Psoas muscle (tissue), 8 donors: ENCODE measurements at regions of chr9 and their contacts with region 1.

Region 1: DNA sequence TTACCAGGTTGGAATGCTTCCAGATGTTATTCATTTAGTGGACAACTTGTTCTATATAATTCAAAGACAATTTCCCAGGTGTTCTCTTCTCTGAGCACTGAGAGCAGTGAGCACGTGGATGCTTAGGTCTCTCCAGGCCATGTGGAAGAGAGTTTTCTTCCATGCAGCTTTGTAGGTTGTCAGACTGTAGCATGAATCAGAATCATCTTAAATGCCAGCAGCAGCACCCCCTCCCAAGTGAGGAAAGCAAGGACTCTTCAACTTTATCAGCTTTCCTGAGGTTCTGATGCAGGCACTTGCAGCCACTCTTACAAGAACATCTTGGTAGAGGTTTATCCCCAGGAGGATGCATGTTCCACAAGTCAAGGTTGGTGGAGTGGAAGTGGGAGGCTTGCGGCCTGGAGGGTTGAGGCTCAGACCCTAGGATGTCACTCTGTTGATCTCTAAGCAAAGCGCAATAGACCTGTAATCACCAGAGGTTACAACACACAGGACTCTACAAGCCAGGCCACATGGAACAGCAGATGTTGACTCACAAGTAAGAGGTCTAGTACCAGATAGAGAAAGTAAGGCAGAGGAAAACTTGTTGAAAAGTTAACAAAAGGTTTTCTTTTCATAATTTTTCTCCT is 47.7 kb downstream of the UGCG start:
- DNase-seq: no peak
- ATAC-seq: no peak
- H3K4me3 ChIP-seq: no peak overlapping the region
- H3K27ac ChIP-seq: no peak overlapping the region
- H3K4me1 ChIP-seq: no peaks in the 10 kb centered on the region
- H3K27me3 ChIP-seq: no peaks in the 10 kb centered on the region
- CTCF ChIP-seq: no peak

Region 2: DNA sequence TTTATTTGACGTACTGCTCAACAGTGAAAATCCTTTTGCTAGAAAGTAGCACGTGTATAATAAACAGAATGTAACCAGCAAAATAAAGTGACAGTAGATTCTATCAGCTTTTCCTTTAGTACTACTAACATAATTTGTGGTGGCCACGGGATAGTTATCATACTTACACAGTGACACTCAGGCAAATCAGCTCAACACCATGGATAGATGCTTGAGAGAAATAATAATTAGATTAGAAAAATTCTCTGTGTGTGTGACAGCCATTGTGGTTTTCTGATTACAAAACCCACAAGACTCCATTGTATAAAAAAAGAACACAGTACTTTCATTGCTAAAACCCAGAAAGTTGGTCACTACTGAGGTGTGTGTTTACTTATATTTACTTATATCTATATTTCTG is 1174.7 kb before region 1 on chr9:
- intact Hi-C with region 1: loop called in 1 of 2 experiments (anchors 5 kb)
- DNase-seq: no peak
- ATAC-seq: no peak
- H3K4me3 ChIP-seq: no peak overlapping the region
- H3K27ac ChIP-seq: no peak overlapping the region
- H3K4me1 ChIP-seq: no peaks in the 10 kb centered on the region
- H3K27me3 ChIP-seq: no peaks in the 10 kb centered on the region
- CTCF ChIP-seq: no peak